ENCODE measurements at regions of chr5 and their contacts with region 1.

Region 1: GRCh38 chr5:58460732-58461286 is 923 bp upstream of the PLK2 start:
- DNase-seq: peak; percentile 93
- ATAC-seq: peak; percentile 81
- H3K4me3 Mint-ChIP-seq: peak overlapping the region; percentile 69
- H3K27ac Mint-ChIP-seq: peak overlapping the region; percentile 11
- H3K4me1 Mint-ChIP-seq: peaks cover 8% of the 10 kb centered on the region
- H3K27me3 Mint-ChIP-seq: peaks cover 11% of the 10 kb centered on the region

Region 2: DNA sequence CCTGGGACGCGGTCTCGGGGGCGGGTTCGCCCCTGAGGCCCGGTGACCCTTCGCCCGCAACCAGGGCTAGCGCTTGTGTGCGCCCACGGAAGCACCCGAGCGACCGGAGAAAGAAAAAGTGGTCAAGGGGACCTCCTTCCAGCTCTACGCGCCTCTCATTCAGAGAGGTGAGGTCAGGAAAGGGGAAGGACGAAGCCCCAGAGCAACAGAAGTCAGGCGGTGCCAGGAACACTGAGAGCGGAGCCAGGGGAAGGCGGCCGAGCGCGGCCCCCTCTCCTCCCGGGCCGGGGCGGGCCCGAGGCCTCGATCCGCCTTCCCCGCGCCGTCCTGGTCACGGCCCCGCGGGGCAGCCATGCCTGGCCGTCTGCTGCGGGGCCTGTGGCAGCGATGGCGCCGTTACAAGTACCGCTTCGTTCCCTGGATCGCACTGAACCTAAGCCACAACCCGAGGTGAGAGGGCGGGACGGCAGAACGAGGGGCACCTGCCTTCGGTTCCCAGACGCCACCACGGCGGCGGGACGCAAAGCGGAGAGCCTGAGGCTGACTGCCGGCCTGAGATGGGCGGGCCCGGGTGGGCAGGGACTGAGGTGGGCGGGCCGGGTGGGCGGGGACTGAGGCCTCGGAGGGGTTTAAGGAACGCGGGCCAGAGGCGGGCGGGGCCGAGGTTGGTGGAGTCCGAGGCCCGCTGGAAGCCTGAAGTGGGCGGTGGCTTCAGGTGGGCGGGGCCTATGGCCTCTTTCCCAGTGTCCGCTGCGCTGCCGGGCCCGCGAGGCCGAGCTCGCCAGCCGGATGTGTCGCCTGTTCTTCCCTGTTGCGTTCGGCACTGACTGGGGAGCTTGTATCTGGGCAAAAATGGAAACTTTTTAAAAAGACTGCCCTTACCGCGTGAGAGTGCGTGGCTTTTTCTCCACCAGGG is 1551.3 kb before region 1 on chr5 and contains the start of gene SETD9:
- CTCF ChIA-PET with region 1: no interaction called
- POLR2A ChIA-PET with region 1: no interaction called
- intact Hi-C with region 1: loop called (anchors 1 to 5 kb)
- DNase-seq: peak; percentile 97
- ATAC-seq: peak; percentile 92
- H3K4me3 Mint-ChIP-seq: peak within 1 kb of the TSS; percentile 90
- H3K27ac Mint-ChIP-seq: peak within 1 kb of the TSS; percentile 94
- H3K4me1 Mint-ChIP-seq: peaks cover 20% of the 10 kb centered on the region
- H3K27me3 Mint-ChIP-seq: peaks cover 5% of the 10 kb centered on the region
- total RNA-seq, gene SETD9: 5.4 to 6.8 TPM

Region 3: DNA sequence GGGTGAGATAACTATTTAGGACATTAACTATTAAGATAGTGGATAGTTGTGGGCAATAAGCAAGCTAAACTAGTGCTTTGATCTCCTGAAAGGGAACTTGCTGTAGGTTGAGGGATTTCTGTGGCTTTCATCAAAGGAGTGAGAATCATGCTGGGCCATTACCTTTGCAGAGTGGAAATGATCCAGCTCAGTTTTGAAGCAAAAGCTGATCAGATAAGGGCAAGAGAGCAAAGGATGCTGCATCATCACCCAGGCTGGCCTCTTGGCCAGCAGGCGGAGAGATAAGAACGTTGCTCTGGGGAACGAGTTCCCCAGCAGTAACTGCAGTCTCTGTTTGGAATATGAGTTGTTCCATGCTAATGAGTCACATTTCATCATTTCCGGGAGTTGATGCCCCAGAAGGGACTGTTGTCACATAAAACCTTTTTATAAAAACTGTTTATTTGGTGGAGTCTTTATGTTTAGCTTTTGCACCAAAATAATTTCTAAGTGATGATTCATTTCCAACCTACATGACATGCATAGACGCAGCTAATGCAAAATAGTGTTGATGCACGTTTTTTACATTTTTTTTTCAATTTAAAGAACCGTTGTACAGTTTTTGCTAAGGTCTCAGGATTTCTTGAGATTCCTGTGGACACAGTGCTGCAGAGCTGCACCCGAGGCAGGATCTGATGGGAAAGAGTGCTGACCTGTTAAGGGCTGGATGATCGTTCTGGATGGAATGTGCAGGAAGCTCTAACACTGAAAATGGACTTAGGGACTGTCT is 1077.5 kb before region 1 on chr5:
- CTCF ChIA-PET with region 1: no interaction called
- POLR2A ChIA-PET with region 1: no interaction called
- intact Hi-C with region 1: loop called (anchors 1 to 5 kb)
- DNase-seq: peak; percentile 72
- ATAC-seq: peak; percentile 97
- H3K4me3 Mint-ChIP-seq: no peak overlapping the region
- H3K27ac Mint-ChIP-seq: peak overlapping the region; percentile 4
- H3K4me1 Mint-ChIP-seq: peaks cover 17% of the 10 kb centered on the region
- H3K27me3 Mint-ChIP-seq: peaks cover 1% of the 10 kb centered on the region

Region 4: DNA sequence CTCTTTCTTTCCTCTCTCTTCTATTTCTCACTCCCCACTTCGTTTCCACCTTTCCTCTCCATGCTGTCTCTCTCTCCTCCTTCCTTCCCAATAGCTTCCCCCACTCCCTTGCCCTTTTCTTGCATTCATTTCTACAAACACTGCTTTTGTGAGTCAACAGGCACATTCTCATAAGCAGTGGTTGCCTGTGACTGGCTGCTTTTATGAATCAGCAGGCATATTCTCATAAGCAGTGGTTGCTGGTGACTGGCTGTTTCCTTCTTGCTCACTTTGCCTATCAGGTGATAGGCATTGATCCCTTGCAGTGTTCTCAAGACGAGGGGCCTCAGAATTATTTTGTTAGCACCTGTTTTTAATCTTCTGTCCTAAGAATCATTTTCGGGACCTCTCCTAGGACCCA is 862.1 kb before region 1 on chr5:
- CTCF ChIA-PET with region 1: interaction called, 6 read pairs
- POLR2A ChIA-PET with region 1: no interaction called
- intact Hi-C with region 1: loop called in 1 of 2 experiments (anchors 5 kb)
- DNase-seq: peak; percentile 67
- ATAC-seq: peak; percentile 95
- H3K4me3 Mint-ChIP-seq: no peak overlapping the region
- H3K27ac Mint-ChIP-seq: no peak overlapping the region
- H3K4me1 Mint-ChIP-seq: peaks cover 21% of the 10 kb centered on the region
- H3K27me3 Mint-ChIP-seq: peaks cover 12% of the 10 kb centered on the region

Region 5: DNA sequence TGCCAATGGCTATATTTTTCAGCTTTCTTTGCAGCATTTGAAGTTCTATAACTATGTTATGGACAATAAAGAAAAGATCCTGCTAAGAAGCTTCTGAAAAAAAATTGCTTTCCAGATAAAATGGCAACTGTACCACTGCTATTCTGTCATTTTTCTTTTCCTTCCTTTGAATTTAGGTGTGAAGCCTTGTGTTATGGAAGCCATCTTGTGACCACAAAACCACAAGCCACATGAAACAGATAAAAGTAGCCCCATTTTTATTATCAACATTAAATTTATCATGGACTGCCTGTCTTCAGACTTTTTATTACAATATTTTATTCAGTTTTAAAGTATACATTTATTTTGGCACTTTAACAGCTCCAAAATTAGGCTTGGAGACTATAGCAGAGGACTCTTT is 688.3 kb before region 1 on chr5:
- CTCF ChIA-PET with region 1: interaction called, 50 read pairs
- POLR2A ChIA-PET with region 1: no interaction called
- intact Hi-C with region 1: no loop called
- DNase-seq: no peak
- ATAC-seq: no peak
- H3K4me3 Mint-ChIP-seq: no peak overlapping the region
- H3K27ac Mint-ChIP-seq: no peak overlapping the region
- H3K4me1 Mint-ChIP-seq: peaks cover 4% of the 10 kb centered on the region
- H3K27me3 Mint-ChIP-seq: peaks cover 7% of the 10 kb centered on the region

Region 6: GRCh38 chr5:57887851-57888621 is 572.8 kb before region 1 on chr5:
- CTCF ChIA-PET with region 1: interaction called, 7 read pairs
- POLR2A ChIA-PET with region 1: no interaction called
- intact Hi-C with region 1: loop called in 1 of 2 experiments (anchors 1 kb)
- DNase-seq: peak; percentile 13
- ATAC-seq: no peak
- H3K4me3 Mint-ChIP-seq: no peak overlapping the region
- H3K27ac Mint-ChIP-seq: no peak overlapping the region
- H3K4me1 Mint-ChIP-seq: no peaks in the 10 kb centered on the region
- H3K27me3 Mint-ChIP-seq: peaks cover 3% of the 10 kb centered on the region

Region 7: DNA sequence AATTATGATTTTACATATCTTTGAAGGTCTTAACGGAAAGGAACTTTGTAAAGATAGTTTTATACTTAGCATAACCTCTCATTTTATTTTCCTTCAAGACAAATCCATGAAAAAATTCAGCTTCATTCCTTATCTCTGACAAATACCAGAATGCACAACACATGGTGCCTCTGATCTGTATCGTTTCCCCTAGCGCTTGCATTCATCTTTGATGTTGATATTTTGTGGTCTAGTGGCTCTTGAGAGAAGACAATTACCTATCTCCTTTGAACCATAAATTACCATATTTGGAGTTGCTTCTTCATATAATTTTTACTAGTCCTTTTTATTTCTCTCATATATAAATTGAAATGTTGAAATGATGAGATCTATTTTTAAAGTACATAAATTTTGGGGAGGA is 881.4 kb after region 1 on chr5:
- CTCF ChIA-PET with region 1: no interaction called
- POLR2A ChIA-PET with region 1: no interaction called
- intact Hi-C with region 1: no loop called
- DNase-seq: no peak
- ATAC-seq: no peak
- H3K4me3 Mint-ChIP-seq: no peak overlapping the region
- H3K27ac Mint-ChIP-seq: no peak overlapping the region
- H3K4me1 Mint-ChIP-seq: peaks cover 2% of the 10 kb centered on the region
- H3K27me3 Mint-ChIP-seq: peaks cover 28% of the 10 kb centered on the region